Body of pancreas (tissue), 4 donors: ENCODE measurements at regions of chr1 and their contacts with region 1.

Region 1: DNA sequence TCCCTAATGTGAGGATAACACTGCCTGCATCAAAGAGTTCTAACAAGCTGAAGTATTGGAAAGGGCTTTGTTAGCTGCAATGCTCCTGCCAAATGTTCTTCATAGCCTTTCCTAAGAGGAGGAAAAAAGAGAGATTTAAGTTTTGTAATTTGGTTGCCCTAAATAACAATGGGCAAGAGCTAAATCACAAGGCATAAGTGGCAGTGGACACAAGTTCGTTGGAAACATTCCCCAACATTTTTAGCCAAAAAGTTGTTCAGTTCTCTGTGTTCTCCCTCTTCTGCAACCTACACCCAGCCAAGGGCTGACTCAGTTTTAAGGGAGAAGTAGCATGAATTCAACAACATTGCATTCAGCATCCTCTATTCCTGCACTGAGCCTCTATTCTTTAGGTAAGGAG is 2.6 kb upstream of the UQCRHL start:
- DNase-seq: no peak
- ATAC-seq: no peak
- H3K4me3 ChIP-seq: no peak overlapping the region
- H3K27ac ChIP-seq: no peak overlapping the region
- H3K4me1 ChIP-seq: no peaks in the 10 kb centered on the region
- H3K27me3 ChIP-seq: no peaks in the 10 kb centered on the region
- CTCF ChIP-seq: no peak
- POLR2A ChIP-seq: no peak

Region 2: DNA sequence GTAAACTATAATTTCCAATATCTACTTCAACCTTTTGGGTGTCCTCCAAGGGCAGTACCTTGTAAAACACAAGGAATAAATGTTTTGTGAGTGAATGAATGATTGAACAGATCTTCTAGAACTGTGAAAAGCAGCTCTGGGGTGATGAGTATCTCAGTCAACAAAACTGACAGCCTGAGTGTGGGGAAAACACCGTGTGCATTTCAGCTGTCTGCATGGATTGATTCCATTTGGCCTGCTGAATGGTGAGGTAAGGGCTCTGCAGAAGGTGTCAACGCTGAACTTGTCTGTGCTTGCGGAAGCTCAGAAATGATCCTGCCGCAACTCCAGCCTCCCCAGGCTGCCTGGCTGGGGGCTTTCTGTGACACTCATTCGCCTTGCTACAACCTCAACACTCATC is 217.8 kb before region 1 on chr1:
- intact Hi-C with region 1: no loop called
- DNase-seq: peak in 1 of 4 donors; percentile 41
- ATAC-seq: no peak
- H3K4me3 ChIP-seq: no peak overlapping the region
- H3K27ac ChIP-seq: no peak overlapping the region
- H3K4me1 ChIP-seq: no peaks in the 10 kb centered on the region
- H3K27me3 ChIP-seq: no peaks in the 10 kb centered on the region
- CTCF ChIP-seq: no peak
- POLR2A ChIP-seq: no peak

Region 3: GRCh38 chr1:15749399-15750291 is 60.4 kb before region 1 on chr1:
- intact Hi-C with region 1: no loop called
- DNase-seq: no peak
- ATAC-seq: peak; percentile 20
- H3K4me3 ChIP-seq: no peak overlapping the region
- H3K27ac ChIP-seq: peak overlapping the region in 3 of 4 donors; percentile 26 to 39 (median 36)
- H3K4me1 ChIP-seq: peaks cover 10% of the 10 kb centered on the region
- H3K27me3 ChIP-seq: no peaks in the 10 kb centered on the region
- CTCF ChIP-seq: no peak
- POLR2A ChIP-seq: no peak

Region 4: GRCh38 chr1:15994590-15995351 is 184.7 kb after region 1 on chr1:
- intact Hi-C with region 1: loop called (anchors 10 kb)
- DNase-seq: peak; percentile 62 to 75 (median 66)
- ATAC-seq: peak; percentile 72
- H3K4me3 ChIP-seq: no peak overlapping the region
- H3K27ac ChIP-seq: no peak overlapping the region
- H3K4me1 ChIP-seq: peaks cover 1% of the 10 kb centered on the region
- H3K27me3 ChIP-seq: no peaks in the 10 kb centered on the region
- CTCF ChIP-seq: peak; percentile 50 to 88 (median 66)
- POLR2A ChIP-seq: no peak